Adrenal gland (tissue), 19 donors: ENCODE measurements at regions of chr9 and their contacts with region 1.

Region 1: GRCh38 chr9:129524582-129525270 is 96.2 kb downstream of the C9orf50 start:
- DNase-seq: no peak
- H3K4me3 ChIP-seq: no peak overlapping the region
- H3K27ac ChIP-seq: no peak overlapping the region
- H3K4me1 ChIP-seq: no peaks in the 10 kb centered on the region
- H3K27me3 ChIP-seq: no peaks in the 10 kb centered on the region
- CTCF ChIP-seq: no peak
- POLR2A ChIP-seq: no peak

Region 2: GRCh38 chr9:129301941-129302340 is 222.8 kb before region 1 on chr9:
- intact Hi-C with region 1: no loop called
- DNase-seq: peak in 1 of 7 donors; percentile 6
- H3K4me3 ChIP-seq: no peak overlapping the region
- H3K27ac ChIP-seq: no peak overlapping the region
- H3K4me1 ChIP-seq: no peaks in the 10 kb centered on the region
- H3K27me3 ChIP-seq: no peaks in the 10 kb centered on the region
- CTCF ChIP-seq: no peak
- POLR2A ChIP-seq: no peak

Region 3: GRCh38 chr9:129413537-129414376 is 111.0 kb before region 1 on chr9:
- intact Hi-C with region 1: no loop called
- DNase-seq: peak; percentile 98 to 100 (median 99)
- H3K4me3 ChIP-seq: peak overlapping the region in 3 of 4 donors; percentile 45 to 71 (median 51)
- H3K27ac ChIP-seq: peak overlapping the region; percentile 98 to 100 (median 99)
- H3K4me1 ChIP-seq: peaks cover 19 to 22% of the 10 kb centered on the region in 2 donors
- H3K27me3 ChIP-seq: no peaks in the 10 kb centered on the region
- CTCF ChIP-seq: peak in 1 of 6 experiments; percentile 21
- POLR2A ChIP-seq: peak; percentile 67 to 78

Region 4: DNA sequence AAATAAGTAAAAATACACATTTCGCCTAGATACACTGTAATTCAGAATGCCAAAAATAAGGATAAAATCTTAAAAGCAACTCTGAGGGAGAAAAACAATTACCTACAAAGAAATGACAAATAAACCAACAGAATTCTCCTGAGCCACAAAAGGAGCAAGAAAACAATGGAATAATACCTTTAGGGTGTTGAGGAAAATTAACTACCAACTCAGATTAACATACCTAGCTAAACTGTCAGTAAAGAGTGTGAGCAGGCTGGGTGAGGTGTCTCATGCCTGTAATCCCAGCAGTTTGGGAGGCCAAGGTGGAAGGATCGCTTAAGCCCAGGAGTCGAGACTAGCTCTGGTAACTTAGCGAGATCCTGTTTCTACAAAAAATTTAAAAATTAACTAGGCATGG is 14.7 kb after region 1 on chr9:
- intact Hi-C with region 1: loop called in 1 of 2 experiments (anchors 2 kb)
- DNase-seq: no peak
- H3K4me3 ChIP-seq: no peak overlapping the region
- H3K27ac ChIP-seq: no peak overlapping the region
- H3K4me1 ChIP-seq: no peaks in the 10 kb centered on the region
- H3K27me3 ChIP-seq: no peaks in the 10 kb centered on the region
- CTCF ChIP-seq: no peak
- POLR2A ChIP-seq: no peak